ENCODE measurements at regions of chr18 and their contacts with region 1.

Region 1: GRCh38 chr18:50266248-50266704 is at the start of gene CFAP53:
- DNase-seq: peak; percentile 73 to 83 (median 77)
- H3K4me3 ChIP-seq: peak within 1 kb of the TSS; percentile 58 to 63
- H3K4me3 Mint-ChIP-seq: peak within 1 kb of the TSS; percentile 83 to 97 (median 90)
- H3K27ac ChIP-seq: peak within 1 kb of the TSS; percentile 49
- H3K27ac Mint-ChIP-seq: peak within 1 kb of the TSS; percentile 81 to 93 (median 90)
- H3K4me1 ChIP-seq: peaks cover 15% of the 10 kb centered on the region
- H3K4me1 Mint-ChIP-seq: peaks cover 11 to 23% (median 18%) of the 10 kb centered on the region in 4 donors
- H3K27me3 ChIP-seq: no peaks in the 10 kb centered on the region
- H3K27me3 Mint-ChIP-seq: no peaks in the 10 kb centered on the region
- total RNA-seq, gene CFAP53: 1.4 to 1.6 TPM

Region 2: GRCh38 chr18:50281295-50281971 is 15.2 kb after region 1 on chr18 and contains the start of gene MBD1:
- CTCF ChIA-PET with region 1: interaction called, 19 read pairs
- POLR2A ChIA-PET with region 1: interaction called, 68 read pairs
- intact Hi-C with region 1: loop called (anchors 1 kb)
- DNase-seq: peak; percentile 97 to 99 (median 98)
- H3K4me3 ChIP-seq: peak within 1 kb of the TSS; percentile 45 to 97
- H3K4me3 Mint-ChIP-seq: peak within 1 kb of the TSS; percentile 96 to 99 (median 98)
- H3K27ac ChIP-seq: peak within 1 kb of the TSS; percentile 95
- H3K27ac Mint-ChIP-seq: peak within 1 kb of the TSS; percentile 88 to 99 (median 98)
- H3K4me1 ChIP-seq: peaks cover 36% of the 10 kb centered on the region
- H3K4me1 Mint-ChIP-seq: peaks cover 31 to 59% (median 47%) of the 10 kb centered on the region in 4 donors
- H3K27me3 ChIP-seq: no peaks in the 10 kb centered on the region
- H3K27me3 Mint-ChIP-seq: no peaks in the 10 kb centered on the region
- total RNA-seq, gene MBD1: 135 to 144 TPM

Region 3: GRCh38 chr18:50297621-50298442 is 31.6 kb after region 1 on chr18:
- CTCF ChIA-PET with region 1: interaction called, 3 read pairs
- POLR2A ChIA-PET with region 1: no interaction called
- intact Hi-C with region 1: loop called (anchors 1 kb)
- DNase-seq: peak; percentile 65 to 73 (median 70)
- H3K4me3 ChIP-seq: peak overlapping the region in 1 of 2 donors; percentile 36
- H3K4me3 Mint-ChIP-seq: peak overlapping the region; percentile 76 to 86 (median 81)
- H3K27ac ChIP-seq: no peak overlapping the region
- H3K27ac Mint-ChIP-seq: peak overlapping the region in 5 of 7 donors; percentile 25 to 90 (median 69)
- H3K4me1 ChIP-seq: peaks cover 11% of the 10 kb centered on the region
- H3K4me1 Mint-ChIP-seq: peaks cover 5 to 12% (median 7%) of the 10 kb centered on the region in 4 donors
- H3K27me3 ChIP-seq: peaks cover 6% of the 10 kb centered on the region
- H3K27me3 Mint-ChIP-seq: peaks cover 19 to 23% of the 10 kb centered on the region in 2 donors